ENCODE measurements at regions of chr7 and their contacts with region 1.

Region 1: GRCh38 chr7:80453699-80454340 is 58.0 kb downstream of the GNAT3 start:
- DNase-seq: peak; percentile 13
- H3K4me3 Mint-ChIP-seq: no peak overlapping the region
- H3K27ac Mint-ChIP-seq: no peak overlapping the region
- H3K4me1 Mint-ChIP-seq: no peaks in the 10 kb centered on the region
- H3K27me3 Mint-ChIP-seq: peaks cover 5% of the 10 kb centered on the region

Region 2: DNA sequence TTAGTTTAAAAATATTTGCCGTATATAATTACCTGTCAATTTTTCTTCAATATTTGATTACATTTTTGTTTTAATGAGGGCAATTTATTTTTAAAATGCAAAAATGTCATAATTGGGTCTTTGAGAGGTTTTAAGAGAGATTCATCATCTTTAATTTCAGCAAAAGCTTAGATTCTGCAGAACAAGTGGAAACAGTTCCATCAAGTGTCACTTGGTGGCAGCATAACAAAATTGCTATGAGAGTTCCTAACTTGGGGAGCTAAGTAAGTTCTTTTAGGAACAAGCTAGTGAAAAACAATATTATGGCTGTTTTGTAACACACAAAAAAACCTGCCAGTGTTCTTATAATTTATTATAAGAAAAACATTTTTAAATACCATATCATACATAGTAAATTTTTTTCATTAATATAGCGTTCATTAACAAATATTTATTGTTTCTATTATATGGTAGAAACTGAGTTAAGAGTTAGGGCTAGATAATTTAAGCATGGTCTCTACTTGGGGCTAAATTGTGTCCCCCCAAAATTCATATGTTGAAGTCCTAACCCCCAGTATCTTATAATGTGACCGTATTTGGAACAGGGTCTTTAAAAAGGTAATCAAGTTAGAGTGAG is 1155.6 kb before region 1 on chr7:
- CTCF ChIA-PET with region 1: no interaction called
- intact Hi-C with region 1: loop called (anchors 10 kb)
- DNase-seq: peak; percentile 13
- H3K4me3 Mint-ChIP-seq: no peak overlapping the region
- H3K27ac Mint-ChIP-seq: no peak overlapping the region
- H3K4me1 Mint-ChIP-seq: no peaks in the 10 kb centered on the region
- H3K27me3 Mint-ChIP-seq: no peaks in the 10 kb centered on the region

Region 3: GRCh38 chr7:80095545-80095944 is 358.3 kb before region 1 on chr7:
- CTCF ChIA-PET with region 1: no interaction called
- intact Hi-C with region 1: loop called (anchors 1 kb)
- DNase-seq: no peak
- H3K4me3 Mint-ChIP-seq: no peak overlapping the region
- H3K27ac Mint-ChIP-seq: no peak overlapping the region
- H3K4me1 Mint-ChIP-seq: no peaks in the 10 kb centered on the region
- H3K27me3 Mint-ChIP-seq: no peaks in the 10 kb centered on the region

Region 4: DNA sequence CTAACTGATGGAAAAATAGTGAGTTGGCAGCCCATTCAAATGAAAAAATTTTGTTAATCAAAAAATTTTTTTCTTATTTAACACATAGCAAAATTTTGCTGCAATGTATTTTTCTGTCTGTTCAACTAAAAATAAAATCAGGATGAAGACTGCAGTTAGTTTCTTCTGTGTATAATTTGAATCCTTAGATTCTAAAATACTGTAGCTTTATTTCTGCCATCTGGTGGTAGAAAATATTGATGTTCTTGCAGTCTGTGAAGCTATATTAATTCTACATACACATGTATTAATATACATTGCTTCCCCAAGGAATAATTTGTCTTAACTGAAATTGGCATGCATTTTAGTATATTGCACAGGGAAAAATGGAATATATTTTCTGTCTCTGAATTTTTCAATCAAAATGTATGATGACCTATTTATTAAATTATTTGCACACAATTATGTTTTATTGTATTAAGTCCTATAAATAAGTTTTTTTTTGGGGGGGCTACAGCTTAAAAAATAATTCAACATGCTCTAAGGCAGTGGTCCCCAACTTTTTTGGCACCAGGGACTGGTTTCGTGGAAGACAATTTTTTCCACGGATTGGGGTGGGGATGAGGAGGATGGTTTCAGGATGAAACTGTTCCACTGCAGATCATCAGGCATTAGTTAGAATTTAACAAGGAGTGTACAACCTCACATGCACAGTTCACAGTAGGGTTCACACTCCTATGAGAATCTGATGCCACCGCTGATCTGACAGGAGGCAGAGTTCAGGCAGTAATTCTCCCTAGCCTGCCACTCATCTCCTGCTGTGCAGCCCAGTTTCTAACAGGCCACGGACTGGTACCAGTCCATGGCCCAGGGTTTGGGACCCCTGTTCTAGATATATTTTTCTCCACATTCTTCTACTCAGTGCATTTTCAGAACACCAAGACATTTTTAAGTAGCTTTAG is 61.3 kb before region 1 on chr7:
- CTCF ChIA-PET with region 1: no interaction called
- intact Hi-C with region 1: loop called (anchors 2 kb)
- DNase-seq: no peak
- H3K4me3 Mint-ChIP-seq: no peak overlapping the region
- H3K27ac Mint-ChIP-seq: no peak overlapping the region
- H3K4me1 Mint-ChIP-seq: no peaks in the 10 kb centered on the region
- H3K27me3 Mint-ChIP-seq: no peaks in the 10 kb centered on the region

Region 5: GRCh38 chr7:80659120-80660055 is 205.6 kb after region 1 on chr7:
- CTCF ChIA-PET with region 1: no interaction called
- intact Hi-C with region 1: loop called (anchors 10 kb)
- DNase-seq: no peak
- H3K4me3 Mint-ChIP-seq: no peak overlapping the region
- H3K27ac Mint-ChIP-seq: no peak overlapping the region
- H3K4me1 Mint-ChIP-seq: no peaks in the 10 kb centered on the region
- H3K27me3 Mint-ChIP-seq: no peaks in the 10 kb centered on the region

Region 6: GRCh38 chr7:81562581-81562980 is 1108.8 kb after region 1 on chr7:
- CTCF ChIA-PET with region 1: no interaction called
- intact Hi-C with region 1: no loop called
- DNase-seq: no peak
- H3K4me3 Mint-ChIP-seq: no peak overlapping the region
- H3K27ac Mint-ChIP-seq: no peak overlapping the region
- H3K4me1 Mint-ChIP-seq: no peaks in the 10 kb centered on the region
- H3K27me3 Mint-ChIP-seq: no peaks in the 10 kb centered on the region

Measured in activated naive CD4-positive, alpha-beta T cell treated with anti-CD3 and anti-CD28 coated beads for 36 hours (primary cell).